BJ (cell line): ENCODE measurements at regions of chr12 and their contacts with region 1.

Region 1: DNA sequence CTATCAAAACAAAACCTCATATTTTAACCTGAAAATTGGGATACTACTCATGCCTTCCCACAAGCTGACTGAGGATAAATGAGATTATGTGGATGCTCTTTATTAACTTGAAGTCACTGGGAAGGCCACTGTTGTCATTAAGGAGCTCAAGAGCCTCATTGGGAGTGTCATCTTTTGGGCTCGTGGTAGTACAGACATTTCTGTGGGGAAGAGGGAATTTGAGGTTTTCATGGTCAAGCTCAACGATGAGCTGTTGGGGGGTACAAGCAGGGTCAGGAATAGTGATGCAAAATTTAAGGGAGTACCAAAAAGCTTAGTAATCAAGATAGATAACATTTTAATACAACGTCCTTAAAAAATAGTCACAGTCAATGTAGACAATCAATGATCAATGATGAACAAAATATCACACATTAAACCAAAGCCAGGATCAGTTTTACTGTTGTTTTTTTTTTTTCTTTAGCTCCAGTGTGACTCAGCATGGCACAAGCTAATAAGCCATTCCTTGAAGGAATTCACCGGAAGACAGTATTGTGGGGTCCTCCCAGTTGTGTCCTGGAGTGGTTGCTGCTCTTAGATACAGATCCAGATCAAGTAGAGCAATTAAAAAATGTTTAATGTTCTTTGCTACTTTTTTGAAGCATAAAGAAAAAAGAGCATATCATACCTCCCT is 130.9 kb downstream of the C12orf75 start:
- DNase-seq: no peak
- H3K4me3 ChIP-seq: no peak overlapping the region
- H3K27me3 ChIP-seq: no peaks in the 10 kb centered on the region
- CTCF ChIP-seq: no peak

Region 2: DNA sequence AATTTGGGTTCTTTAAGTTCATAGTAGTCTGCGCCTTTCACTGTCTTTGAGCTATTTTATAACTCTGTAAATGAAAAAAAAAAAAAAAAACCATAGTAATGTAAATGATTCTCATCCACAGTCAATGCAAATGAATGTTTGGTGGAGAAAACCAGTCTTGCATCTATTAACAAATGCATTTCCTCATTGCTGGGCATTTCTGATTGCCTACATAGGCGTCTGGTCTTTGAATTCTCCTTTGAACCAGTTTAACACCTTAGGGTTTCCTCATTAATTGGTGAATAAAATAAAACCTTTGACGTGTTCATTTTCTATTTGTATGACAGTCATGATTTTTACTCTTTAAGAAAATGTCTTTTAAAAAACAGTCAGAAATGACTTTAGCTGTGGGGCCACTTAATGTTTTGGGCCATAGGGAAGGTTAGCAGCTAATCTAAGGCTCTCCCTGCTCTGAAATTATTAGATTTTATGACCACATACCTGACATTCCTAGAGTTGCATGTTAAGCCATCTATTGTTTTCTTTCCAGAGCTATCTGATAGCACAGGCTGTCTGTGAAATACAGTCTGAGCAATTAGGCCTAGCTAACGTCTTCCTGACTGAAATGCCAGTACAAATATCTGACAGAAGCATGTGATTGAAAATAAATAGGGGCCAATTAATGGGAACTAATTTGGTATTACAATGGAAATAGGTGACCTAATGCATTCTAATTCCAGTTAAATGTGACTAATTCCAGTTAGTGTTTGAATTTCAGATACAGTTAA is 16.0 kb before region 1 on chr12:
- CTCF ChIA-PET with region 1: interaction called, 4 read pairs
- POLR2A ChIA-PET with region 1: interaction called, 11 read pairs
- DNase-seq: no peak
- H3K4me3 ChIP-seq: no peak overlapping the region
- H3K27me3 ChIP-seq: no peaks in the 10 kb centered on the region
- CTCF ChIP-seq: no peak